ENCODE measurements at regions of chr16 and their contacts with region 1.

Region 1: DNA sequence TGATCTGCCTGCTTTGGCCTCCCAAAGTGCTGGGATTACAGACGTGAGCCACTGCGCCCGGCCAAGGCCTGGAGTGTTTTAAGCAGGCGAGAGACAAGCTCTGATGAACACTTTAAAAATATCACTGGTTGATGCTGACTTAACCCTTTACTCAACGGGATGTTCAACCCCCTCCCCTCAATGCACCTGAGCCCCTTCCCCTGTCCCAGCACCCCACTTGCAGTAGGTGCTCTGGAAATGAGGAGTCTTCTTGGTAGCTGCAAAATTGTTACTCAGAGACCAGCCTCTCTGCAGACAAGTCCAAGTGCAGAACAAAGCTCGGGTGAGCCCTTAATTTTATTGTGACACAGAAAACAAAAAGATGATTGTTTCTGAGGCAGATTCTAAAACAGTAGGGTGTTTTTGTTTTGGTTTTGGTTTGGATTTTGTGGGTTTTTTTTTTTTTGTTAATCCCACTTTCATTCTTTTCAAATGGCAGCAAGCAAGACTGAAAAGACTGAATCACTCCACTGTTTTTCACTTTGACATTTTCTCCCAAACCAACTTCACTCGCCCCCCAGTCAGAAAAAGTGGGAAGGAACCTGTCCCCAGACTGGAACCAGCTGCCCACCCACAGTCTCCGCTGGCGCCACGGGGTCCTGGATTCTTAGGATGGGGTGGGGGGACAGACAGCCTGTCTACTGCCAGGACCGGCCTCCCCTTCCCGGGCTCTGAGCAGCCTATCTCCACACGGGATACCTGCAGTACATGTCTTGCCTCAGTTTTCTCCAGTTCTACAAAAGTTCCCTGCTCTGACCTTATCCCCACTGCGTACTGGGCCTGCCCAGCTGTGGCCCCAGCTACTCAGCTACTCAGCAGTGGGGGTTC is 5.2 kb upstream of the PLLP start:
- DNase-seq: no peak
- ATAC-seq: peak in 1 of 8 donors; percentile 33
- H3K4me3 ChIP-seq: no peak overlapping the region
- H3K27ac ChIP-seq: no peak overlapping the region
- H3K4me1 ChIP-seq: peaks cover 0 to 7% (median 3%) of the 10 kb centered on the region in 9 donors
- H3K27me3 ChIP-seq: peaks cover 0 to 15% (median 3%) of the 10 kb centered on the region in 7 donors
- CTCF ChIP-seq: no peak

Region 2: GRCh38 chr16:56888806-56889205 is 400.8 kb before region 1 on chr16:
- intact Hi-C with region 1: no loop called
- DNase-seq: no peak
- ATAC-seq: no peak
- H3K4me3 ChIP-seq: no peak overlapping the region
- H3K27ac ChIP-seq: no peak overlapping the region
- H3K4me1 ChIP-seq: no peaks in the 10 kb centered on the region
- H3K27me3 ChIP-seq: no peaks in the 10 kb centered on the region
- CTCF ChIP-seq: no peak

Region 3: DNA sequence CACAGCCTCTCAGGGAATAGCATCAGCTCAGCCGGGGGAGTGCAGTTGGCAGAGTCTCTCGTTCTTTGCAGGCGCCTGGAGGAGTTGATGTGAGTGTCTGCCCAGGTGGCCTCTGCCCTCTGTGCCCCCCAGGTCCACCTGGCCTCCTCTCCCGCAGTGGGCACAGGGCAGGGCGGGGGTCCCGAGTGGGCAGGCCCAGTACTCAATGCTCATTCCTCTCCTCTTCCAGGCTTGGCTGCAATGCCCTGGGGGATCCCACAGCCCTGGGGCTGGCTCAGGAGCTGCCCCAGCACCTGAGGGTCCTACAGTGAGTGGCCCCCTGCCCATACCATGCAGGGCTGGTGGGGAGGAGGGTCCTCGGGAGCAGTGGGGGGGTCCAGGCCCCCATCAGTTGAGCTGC is 211.9 kb before region 1 on chr16:
- intact Hi-C with region 1: loop called in 2 of 10 experiments (anchors 5 to 10 kb)
- DNase-seq: no peak
- ATAC-seq: peak in 2 of 8 donors; percentile 14 to 27
- H3K4me3 ChIP-seq: no peak overlapping the region
- H3K27ac ChIP-seq: no peak overlapping the region
- H3K4me1 ChIP-seq: no peaks in the 10 kb centered on the region
- H3K27me3 ChIP-seq: no peaks in the 10 kb centered on the region
- CTCF ChIP-seq: no peak